Activated B cell treated with CpG ODN at 0.5 μM for 24 hours (primary cell): ENCODE measurements at regions of chr5 and their contacts with region 1.

Region 1: GRCh38 chr5:32585446-32586275 is at the start of gene SUB1:
- DNase-seq: peak; percentile 88
- ATAC-seq: peak; percentile 60
- H3K4me3 Mint-ChIP-seq: peak within 1 kb of the TSS; percentile 91
- H3K27ac Mint-ChIP-seq: peak within 1 kb of the TSS; percentile 95
- H3K4me1 Mint-ChIP-seq: peaks cover 85% of the 10 kb centered on the region
- H3K27me3 Mint-ChIP-seq: no peaks in the 10 kb centered on the region
- CTCF ChIP-seq: no peak
- total RNA-seq, gene SUB1: 213 and 237 TPM in 2 replicates

Region 2: DNA sequence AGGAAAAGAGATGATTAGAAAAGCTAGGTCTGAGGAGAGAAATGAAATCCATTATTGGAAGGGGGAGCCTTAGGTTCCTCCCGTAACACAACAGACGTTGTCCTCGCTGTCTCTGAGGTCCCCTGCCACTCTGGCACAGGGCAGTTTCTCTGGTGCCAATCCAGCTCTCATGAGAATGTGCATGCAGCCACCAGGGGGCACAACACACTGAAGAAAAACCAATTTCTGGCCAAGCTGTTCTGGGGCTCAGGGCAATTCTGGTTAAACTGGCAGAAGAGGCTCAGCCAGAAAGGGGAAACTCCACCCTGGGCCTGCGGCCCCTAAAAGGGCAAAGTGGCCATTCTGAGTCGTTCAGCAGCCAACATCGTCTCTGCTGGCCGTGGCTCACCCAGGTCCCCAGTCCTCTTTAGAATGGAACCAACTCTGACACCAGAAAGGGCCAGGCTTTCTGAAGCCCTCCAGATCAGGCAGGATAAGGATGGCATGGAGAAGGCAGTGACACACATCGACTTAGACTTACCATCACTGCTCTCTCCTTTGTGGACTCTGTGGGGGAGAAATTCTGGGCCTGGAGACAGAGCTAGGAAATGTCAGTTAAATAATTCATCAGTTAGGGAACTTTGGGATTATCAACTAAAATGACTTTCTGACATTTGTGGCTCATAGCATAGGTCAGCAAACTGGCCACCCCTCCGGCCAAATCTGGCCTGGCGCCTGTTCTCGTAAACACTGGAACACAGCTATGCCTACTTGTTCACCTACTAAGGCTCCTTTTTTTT is 353.0 kb before region 1 on chr5:
- CTCF ChIA-PET with region 1: interaction called, 37 read pairs
- POLR2A ChIA-PET with region 1: interaction called, 3 read pairs
- intact Hi-C with region 1: loop called (anchors 1 kb)
- DNase-seq: peak; percentile 62
- ATAC-seq: peak; percentile 87
- H3K4me3 Mint-ChIP-seq: no peak overlapping the region
- H3K27ac Mint-ChIP-seq: peak overlapping the region; percentile 10
- H3K4me1 Mint-ChIP-seq: peaks cover 21% of the 10 kb centered on the region
- H3K27me3 Mint-ChIP-seq: no peaks in the 10 kb centered on the region
- CTCF ChIP-seq: no peak

Region 3: GRCh38 chr5:32419791-32420190 is 165.9 kb before region 1 on chr5:
- CTCF ChIA-PET with region 1: interaction called, 7 read pairs
- POLR2A ChIA-PET with region 1: no interaction called
- intact Hi-C with region 1: loop called (anchors 10 kb)
- DNase-seq: no peak
- ATAC-seq: no peak
- H3K4me3 Mint-ChIP-seq: no peak overlapping the region
- H3K27ac Mint-ChIP-seq: no peak overlapping the region
- H3K4me1 Mint-ChIP-seq: peaks cover 27% of the 10 kb centered on the region
- H3K27me3 Mint-ChIP-seq: no peaks in the 10 kb centered on the region
- CTCF ChIP-seq: no peak

Region 4: DNA sequence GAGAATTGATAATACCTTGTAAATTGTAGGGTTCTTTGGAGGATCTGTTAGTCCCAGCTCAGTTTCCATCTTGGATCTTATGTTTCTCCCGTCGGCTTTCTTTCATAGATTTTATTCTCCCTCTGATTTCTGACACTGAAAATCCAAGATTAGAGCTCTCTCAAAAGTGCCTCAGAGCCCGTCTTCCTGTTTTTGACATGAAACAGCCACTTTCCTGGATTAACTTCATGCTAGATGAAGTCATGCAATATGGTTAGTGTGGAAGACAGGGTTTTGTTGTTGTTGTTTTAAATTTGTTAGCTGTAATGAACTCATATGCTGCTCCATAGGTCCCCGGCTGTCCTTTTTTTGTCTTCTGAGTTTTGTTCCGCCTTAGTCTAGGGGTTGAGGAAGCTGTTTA is 89.6 kb before region 1 on chr5:
- CTCF ChIA-PET with region 1: interaction called, 366 read pairs
- POLR2A ChIA-PET with region 1: interaction called, 20 read pairs
- intact Hi-C with region 1: no loop called
- DNase-seq: no peak
- ATAC-seq: no peak
- H3K4me3 Mint-ChIP-seq: no peak overlapping the region
- H3K27ac Mint-ChIP-seq: no peak overlapping the region
- H3K4me1 Mint-ChIP-seq: no peaks in the 10 kb centered on the region
- H3K27me3 Mint-ChIP-seq: peaks cover 17% of the 10 kb centered on the region
- CTCF ChIP-seq: no peak

Region 5: GRCh38 chr5:32572778-32573480 is 12.7 kb before region 1 on chr5:
- CTCF ChIA-PET with region 1: interaction called, 16 read pairs
- POLR2A ChIA-PET with region 1: interaction called, 40 read pairs
- intact Hi-C with region 1: loop called (anchors 1 kb)
- DNase-seq: no peak
- ATAC-seq: peak; percentile 91
- H3K4me3 Mint-ChIP-seq: peak overlapping the region; percentile 44
- H3K27ac Mint-ChIP-seq: peak overlapping the region; percentile 68
- H3K4me1 Mint-ChIP-seq: peaks cover 34% of the 10 kb centered on the region
- H3K27me3 Mint-ChIP-seq: no peaks in the 10 kb centered on the region
- CTCF ChIP-seq: no peak

Region 6: DNA sequence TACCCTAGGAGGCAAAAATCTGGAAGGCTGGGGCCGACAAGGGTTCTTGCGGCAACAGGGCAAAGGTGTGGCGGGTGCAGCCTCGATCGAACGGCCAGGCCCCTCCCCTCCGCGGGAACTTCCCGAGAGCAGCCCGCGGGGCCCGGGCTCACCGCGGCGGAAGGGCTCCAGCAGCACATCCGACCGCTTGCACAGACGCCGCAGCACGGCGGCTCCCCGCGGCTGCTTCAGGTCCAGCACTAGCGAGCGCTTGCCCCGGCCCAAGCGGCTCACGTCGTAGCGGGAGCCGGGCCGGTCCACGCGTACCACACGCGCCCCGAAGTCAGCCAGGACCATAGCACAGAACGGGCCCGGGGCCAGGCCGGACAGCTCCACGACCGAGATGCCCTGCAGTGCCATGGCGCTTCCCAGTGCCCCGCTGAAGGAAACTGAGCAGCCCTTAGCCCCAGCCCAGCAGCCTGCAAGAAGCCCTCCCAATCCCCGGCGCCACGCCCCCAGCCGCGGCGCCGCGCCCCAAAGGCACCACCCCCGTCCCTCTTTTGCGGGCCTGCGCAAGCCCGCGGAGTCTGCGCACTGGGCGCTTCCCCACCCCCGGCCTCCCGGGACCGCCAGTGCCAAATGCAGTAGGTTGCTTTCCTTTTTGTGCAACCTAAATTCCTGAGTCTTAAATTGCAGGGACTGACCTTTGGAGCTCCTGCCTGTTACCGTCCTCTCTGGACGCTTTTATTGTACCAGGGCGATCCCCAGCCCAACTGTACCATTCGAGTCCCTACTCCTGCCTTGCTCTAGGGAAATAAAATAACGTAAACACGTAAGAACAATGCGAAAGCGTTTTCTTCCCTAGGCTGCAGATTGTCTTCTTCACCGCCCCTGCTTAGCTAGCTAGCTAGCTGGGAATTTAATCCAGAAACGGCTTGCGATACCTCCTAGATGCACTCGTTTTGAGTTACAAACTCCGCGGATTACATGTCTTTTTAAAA is 1422.2 kb after region 1 on chr5 and contains the start of gene AMACR:
- CTCF ChIA-PET with region 1: no interaction called
- POLR2A ChIA-PET with region 1: no interaction called
- intact Hi-C with region 1: loop called (anchors 5 kb)
- DNase-seq: peak; percentile 90
- ATAC-seq: peak; percentile 92
- H3K4me3 Mint-ChIP-seq: peak within 1 kb of the TSS; percentile 95
- H3K27ac Mint-ChIP-seq: peak within 1 kb of the TSS; percentile 91
- H3K4me1 Mint-ChIP-seq: peaks cover 23% of the 10 kb centered on the region
- H3K27me3 Mint-ChIP-seq: no peaks in the 10 kb centered on the region
- CTCF ChIP-seq: no peak
- total RNA-seq, gene AMACR: 6.0 and 6.5 TPM in 2 replicates